ENCODE measurements at regions of chr2 and their contacts with region 1.

Region 1: DNA sequence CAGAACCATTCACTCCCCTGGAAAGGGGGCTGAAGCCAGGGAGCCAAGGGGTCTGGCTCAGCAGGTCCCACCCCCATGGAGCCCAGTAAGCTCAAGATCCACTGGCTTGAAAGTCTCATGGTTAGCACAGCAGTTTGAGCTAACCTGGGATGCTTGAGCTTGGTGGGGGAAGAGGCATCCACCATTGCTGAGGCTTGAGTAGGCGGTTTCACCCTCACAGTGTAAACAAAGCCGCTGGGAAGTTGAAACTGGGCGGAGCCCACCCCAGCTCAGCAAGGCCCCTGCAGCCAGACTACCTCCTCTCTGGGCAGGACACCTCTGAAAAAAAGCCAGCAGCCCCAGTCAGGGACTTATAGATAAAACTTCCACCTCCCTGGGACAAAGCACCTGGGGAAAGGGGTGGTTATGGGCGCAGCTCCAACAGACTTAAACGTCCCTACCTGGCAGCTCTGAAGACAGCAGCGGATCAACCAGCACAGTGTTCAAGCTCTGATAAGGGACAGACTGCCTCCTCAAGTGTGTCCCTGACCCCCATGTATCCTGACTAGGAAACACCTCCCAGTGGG is 14.7 kb upstream of the TTC32 start:
- DNase-seq: no peak
- CTCF ChIP-seq: no peak

Region 2: DNA sequence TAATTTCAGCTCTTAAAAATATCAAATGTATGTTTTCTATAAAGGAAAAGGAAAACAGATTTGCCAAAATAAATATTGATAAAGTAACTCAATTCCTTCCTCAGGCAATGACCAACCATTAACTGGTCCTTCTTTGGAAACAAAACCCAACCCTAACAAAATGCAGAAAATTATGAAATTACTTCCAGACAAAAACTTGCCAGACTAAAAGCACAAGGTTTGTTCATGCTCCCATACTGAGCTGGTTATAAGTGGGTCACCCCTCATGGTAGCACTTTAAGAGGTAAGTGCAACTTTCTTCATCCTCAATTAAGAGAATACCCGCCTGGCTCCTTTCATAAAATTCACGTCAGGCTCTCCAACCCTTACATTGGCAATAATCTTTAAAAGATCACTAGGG is 16.5 kb after region 1 on chr2:
- CTCF ChIA-PET with region 1: interaction called, 13 read pairs
- POLR2A ChIA-PET with region 1: no interaction called
- DNase-seq: no peak
- CTCF ChIP-seq: no peak

Measured in GM10248 (cell line).